ENCODE measurements at regions of chr4 and their contacts with region 1.

Region 1: DNA sequence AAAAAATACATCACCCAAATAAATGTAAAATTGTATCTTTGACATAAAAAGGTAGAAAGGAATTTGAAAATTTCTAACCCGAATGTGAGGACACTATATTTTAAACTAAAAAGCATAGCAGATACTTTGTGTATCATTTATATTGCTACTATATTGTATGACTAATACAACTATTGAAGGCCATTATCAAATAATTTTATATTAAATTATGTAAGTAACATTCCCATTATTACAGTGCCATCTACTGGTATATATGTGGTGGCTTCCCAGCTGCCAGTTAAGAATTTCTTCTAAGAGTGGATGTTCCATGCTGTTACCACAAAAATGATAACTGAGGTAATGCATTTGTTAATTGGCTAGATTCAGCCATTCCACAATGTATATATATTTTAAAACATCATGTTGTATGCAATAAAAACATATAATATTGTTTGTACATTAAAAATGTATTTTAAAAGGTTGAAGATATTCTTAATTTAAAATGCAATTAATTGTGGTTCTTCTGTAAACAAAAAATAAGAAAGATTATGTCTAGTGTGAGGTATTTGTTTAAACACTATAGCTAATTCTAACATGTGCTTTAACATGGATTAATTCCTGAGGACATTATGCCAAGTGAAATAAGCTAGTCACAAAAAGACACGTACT is 65.3 kb downstream of the EGF start:
- DNase-seq: no peak
- ATAC-seq: no peak
- H3K4me3 Mint-ChIP-seq: no peak overlapping the region
- H3K27ac Mint-ChIP-seq: no peak overlapping the region
- H3K4me1 Mint-ChIP-seq: no peaks in the 10 kb centered on the region
- H3K27me3 Mint-ChIP-seq: peaks cover 18% of the 10 kb centered on the region
- CTCF ChIP-seq: no peak

Region 2: GRCh38 chr4:108018040-108018883 is 1959.7 kb before region 1 on chr4:
- CTCF ChIA-PET with region 1: interaction called, 3 read pairs
- POLR2A ChIA-PET with region 1: no interaction called
- intact Hi-C with region 1: loop called (anchors 2 kb)
- DNase-seq: peak; percentile 45
- ATAC-seq: peak; percentile 47
- H3K4me3 Mint-ChIP-seq: no peak overlapping the region
- H3K27ac Mint-ChIP-seq: no peak overlapping the region
- H3K4me1 Mint-ChIP-seq: peaks cover 2% of the 10 kb centered on the region
- H3K27me3 Mint-ChIP-seq: no peaks in the 10 kb centered on the region
- CTCF ChIP-seq: no peak

Region 3: GRCh38 chr4:109511414-109511813 is 466.6 kb before region 1 on chr4:
- CTCF ChIA-PET with region 1: no interaction called
- POLR2A ChIA-PET with region 1: no interaction called
- intact Hi-C with region 1: loop called (anchors 10 kb)
- DNase-seq: no peak
- ATAC-seq: no peak
- H3K4me3 Mint-ChIP-seq: no peak overlapping the region
- H3K27ac Mint-ChIP-seq: no peak overlapping the region
- H3K4me1 Mint-ChIP-seq: no peaks in the 10 kb centered on the region
- H3K27me3 Mint-ChIP-seq: no peaks in the 10 kb centered on the region
- CTCF ChIP-seq: no peak

Region 4: DNA sequence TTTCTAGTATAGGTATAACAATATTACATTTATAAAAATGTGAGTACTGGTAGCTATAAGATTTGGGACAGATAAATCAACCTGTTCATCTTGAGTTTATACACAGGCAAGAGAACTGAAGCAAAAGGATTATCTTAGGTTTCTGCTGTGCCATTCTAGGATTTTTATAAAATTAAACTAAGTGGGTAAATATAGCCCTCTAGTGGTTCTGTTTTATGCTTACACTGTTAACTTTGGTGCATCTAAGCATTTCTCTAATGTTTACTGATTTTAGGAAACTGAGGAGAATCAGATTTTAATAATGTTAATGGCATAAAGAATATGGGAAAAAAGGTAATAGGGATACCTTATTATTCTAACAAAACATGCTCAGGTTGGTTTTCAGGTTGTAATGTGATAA is 151.3 kb before region 1 on chr4:
- CTCF ChIA-PET with region 1: interaction called, 3 read pairs
- POLR2A ChIA-PET with region 1: no interaction called
- intact Hi-C with region 1: loop called (anchors 5 kb)
- DNase-seq: no peak
- ATAC-seq: peak; percentile 45
- H3K4me3 Mint-ChIP-seq: no peak overlapping the region
- H3K27ac Mint-ChIP-seq: no peak overlapping the region
- H3K4me1 Mint-ChIP-seq: no peaks in the 10 kb centered on the region
- H3K27me3 Mint-ChIP-seq: no peaks in the 10 kb centered on the region
- CTCF ChIP-seq: no peak

Region 5: GRCh38 chr4:109942292-109942926 is 35.6 kb before region 1 on chr4:
- CTCF ChIA-PET with region 1: no interaction called
- POLR2A ChIA-PET with region 1: no interaction called
- intact Hi-C with region 1: no loop called
- DNase-seq: no peak
- ATAC-seq: no peak
- H3K4me3 Mint-ChIP-seq: no peak overlapping the region
- H3K27ac Mint-ChIP-seq: no peak overlapping the region
- H3K4me1 Mint-ChIP-seq: no peaks in the 10 kb centered on the region
- H3K27me3 Mint-ChIP-seq: peaks cover 8% of the 10 kb centered on the region
- CTCF ChIP-seq: no peak

Region 6: GRCh38 chr4:109959195-109959594 is 18.8 kb before region 1 on chr4:
- CTCF ChIA-PET with region 1: no interaction called
- POLR2A ChIA-PET with region 1: no interaction called
- intact Hi-C with region 1: no loop called
- DNase-seq: no peak
- ATAC-seq: no peak
- H3K4me3 Mint-ChIP-seq: no peak overlapping the region
- H3K27ac Mint-ChIP-seq: no peak overlapping the region
- H3K4me1 Mint-ChIP-seq: no peaks in the 10 kb centered on the region
- H3K27me3 Mint-ChIP-seq: peaks cover 3% of the 10 kb centered on the region
- CTCF ChIP-seq: no peak

Region 7: GRCh38 chr4:110005461-110006056 is 27.6 kb after region 1 on chr4:
- CTCF ChIA-PET with region 1: no interaction called
- POLR2A ChIA-PET with region 1: no interaction called
- intact Hi-C with region 1: no loop called
- DNase-seq: no peak
- ATAC-seq: peak; percentile 60
- H3K4me3 Mint-ChIP-seq: no peak overlapping the region
- H3K27ac Mint-ChIP-seq: no peak overlapping the region
- H3K4me1 Mint-ChIP-seq: no peaks in the 10 kb centered on the region
- H3K27me3 Mint-ChIP-seq: peaks cover 6% of the 10 kb centered on the region
- CTCF ChIP-seq: peak; percentile 83